H1 (cell line): ENCODE measurements at regions of chr3 and their contacts with region 1.

Region 1: DNA sequence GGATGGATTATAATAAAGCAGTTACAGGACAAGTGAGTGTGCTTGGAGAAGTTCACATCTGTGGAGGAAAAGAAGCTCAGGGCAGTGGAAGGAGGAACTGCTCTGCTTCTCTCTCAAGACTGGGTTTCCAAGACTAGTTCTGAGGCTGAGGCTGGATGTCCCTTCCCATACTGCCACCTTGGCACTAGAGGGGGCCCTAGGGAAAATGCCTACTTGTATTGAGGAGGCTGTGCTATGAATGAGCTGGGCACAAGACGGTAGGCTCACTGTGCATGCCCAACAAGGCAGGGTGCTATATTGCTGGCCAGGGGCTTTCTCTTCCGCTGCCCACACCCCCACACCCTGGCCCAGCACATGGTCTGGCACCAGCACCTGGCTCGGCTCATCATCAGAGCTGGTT is 65.2 kb downstream of the SLCO2A1 start:
- DNase-seq: no peak
- H3K4me3 ChIP-seq: no peak overlapping the region
- H3K27ac ChIP-seq: no peak overlapping the region
- H3K4me1 ChIP-seq: no peaks in the 10 kb centered on the region
- H3K27me3 ChIP-seq: no peaks in the 10 kb centered on the region
- CTCF ChIP-seq: peak; percentile 45 to 61 (median 46); a peak in 3 of 4 replicates
- EP300 ChIP-seq: no peak
- POLR2A ChIP-seq: no peak
- RAD21 ChIP-seq: peak; percentile 50 to 67

Region 2: DNA sequence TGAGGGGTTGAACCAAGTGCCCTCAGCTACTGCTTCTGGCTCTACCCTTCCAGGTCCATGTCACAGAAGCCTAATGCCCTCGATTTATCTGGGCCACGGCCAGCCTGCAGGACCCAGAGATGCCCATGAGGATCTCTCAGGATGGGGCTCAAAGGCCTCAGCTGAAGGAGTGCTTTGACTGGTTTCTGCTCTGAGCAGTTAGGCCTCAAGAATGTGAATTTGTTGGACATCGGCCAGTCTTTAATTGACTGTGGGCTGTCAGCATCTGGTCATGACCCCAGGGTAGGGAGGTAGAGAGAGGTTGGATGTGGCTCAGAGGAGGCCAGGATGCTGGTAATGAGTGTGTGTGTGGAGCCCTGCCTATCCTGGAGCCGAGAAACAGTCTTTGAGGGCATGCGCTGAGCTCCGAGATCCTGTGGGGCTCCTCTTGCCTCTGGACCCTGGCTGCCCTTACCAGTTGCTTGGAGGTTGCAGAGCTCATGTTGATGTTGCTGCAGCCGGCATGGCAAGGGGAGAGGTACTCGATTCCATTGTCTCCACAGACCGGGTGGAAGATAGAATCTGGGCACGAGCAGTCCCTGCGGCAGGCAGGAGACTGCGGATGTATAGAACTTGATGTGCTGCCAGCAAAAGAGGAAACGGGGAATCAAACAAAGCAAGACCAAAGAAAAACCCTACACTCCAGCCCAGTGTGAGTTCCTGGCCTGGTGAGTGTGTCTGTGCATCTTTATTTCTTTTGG is 19.7 kb before region 1 on chr3:
- CTCF ChIA-PET with region 1: interaction called, 32 read pairs
- POLR2A ChIA-PET with region 1: no interaction called
- DNase-seq: no peak
- H3K4me3 ChIP-seq: no peak overlapping the region
- H3K27ac ChIP-seq: no peak overlapping the region
- H3K4me1 ChIP-seq: peaks cover 0 to 13% (median 7%) of the 10 kb centered on the region in 4 experiments; a peak in 5 of 7 replicates
- H3K27me3 ChIP-seq: no peaks in the 10 kb centered on the region
- CTCF ChIP-seq: no peak
- EP300 ChIP-seq: no peak
- POLR2A ChIP-seq: no peak
- RAD21 ChIP-seq: no peak